ENCODE measurements at regions of chr10 and their contacts with region 1.

Region 1: DNA sequence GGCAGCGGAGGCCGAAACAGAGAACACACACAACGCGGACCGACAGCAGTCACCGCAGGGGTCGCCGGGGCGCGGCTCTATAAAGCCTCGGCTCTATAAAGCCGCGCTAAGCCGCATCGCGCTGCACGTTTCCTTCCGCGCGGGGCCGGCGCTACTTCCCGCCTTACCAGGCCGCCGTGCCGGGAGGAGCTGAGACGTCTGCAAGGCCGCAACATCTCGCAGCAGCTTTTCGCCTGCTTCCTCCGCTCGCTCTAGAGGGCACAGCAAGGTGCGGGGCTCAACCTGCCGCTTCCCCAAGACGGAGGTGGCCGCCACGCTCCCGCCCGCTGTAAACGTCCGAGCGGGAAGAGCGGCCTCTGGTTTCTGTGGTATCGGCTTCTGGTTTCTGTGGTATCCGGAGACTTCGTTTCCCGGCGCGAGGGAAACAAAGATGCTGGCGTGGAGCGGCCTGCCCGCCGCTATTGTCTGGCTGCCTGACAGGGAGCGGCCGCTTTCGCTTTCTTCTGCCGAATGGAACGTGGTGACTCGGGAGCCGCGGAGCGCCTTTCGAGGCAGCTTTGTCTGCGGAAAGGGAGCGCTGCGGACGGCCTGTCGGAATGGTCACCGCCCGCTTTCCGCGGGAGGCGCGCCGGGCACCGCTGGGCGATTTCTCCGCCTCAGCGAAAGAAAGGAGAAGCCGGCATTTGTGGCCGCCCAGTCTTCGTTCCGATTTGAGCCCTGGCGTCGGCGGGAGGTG is 91.8 kb downstream of the SPAG6 start:
- DNase-seq: peak; percentile 82
- H3K4me3 Mint-ChIP-seq: peak overlapping the region; percentile 89
- H3K27ac Mint-ChIP-seq: peak overlapping the region; percentile 93
- H3K4me1 Mint-ChIP-seq: peaks cover 41% of the 10 kb centered on the region
- H3K27me3 Mint-ChIP-seq: peaks cover 9% of the 10 kb centered on the region

Region 2: DNA sequence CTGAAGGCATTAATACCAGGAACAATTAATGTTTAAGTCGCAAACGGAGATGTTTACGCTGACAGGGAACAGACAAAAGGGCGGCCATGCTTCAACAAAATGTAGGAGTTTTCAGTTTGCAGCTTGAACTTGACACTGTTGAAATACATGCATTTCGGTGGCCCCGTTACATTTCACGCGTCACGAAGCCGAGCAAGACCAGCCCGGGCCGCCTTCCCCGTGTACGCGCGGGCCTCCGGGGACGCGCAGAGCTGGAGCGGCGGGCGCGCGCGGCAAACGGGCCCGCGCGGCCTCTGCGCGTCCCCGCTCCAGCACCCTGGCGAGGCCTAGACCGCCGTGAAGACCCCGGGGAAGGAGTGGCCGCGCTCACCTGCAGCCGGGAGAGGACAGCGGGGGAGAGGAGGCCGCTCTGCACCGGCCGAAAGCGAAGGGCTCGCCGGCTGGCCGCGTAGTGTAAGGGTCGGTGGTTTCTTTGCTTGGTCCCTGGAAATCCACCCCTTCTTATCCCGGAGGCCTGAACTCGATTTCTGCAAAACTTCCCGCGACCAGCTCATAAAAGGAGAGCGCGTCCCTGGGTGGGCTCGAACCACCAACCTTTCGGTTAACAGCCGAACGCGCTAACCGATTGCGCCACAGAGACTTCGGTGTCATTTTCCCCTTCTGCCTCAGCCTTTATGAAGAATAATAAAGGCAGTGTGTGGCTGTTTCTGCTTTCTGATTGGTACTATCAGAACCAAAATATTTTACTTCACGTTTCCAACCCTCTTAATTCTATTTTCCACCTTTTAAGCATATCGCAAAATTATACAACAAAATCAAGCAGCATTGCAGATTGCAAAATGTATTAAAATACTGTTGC is 207.9 kb before region 1 on chr10:
- intact Hi-C with region 1: loop called (anchors 10 kb)
- DNase-seq: peak; percentile 82
- H3K4me3 Mint-ChIP-seq: peak overlapping the region; percentile 88
- H3K27ac Mint-ChIP-seq: peak overlapping the region; percentile 82
- H3K4me1 Mint-ChIP-seq: peaks cover 18% of the 10 kb centered on the region
- H3K27me3 Mint-ChIP-seq: peaks cover 8% of the 10 kb centered on the region

Region 3: DNA sequence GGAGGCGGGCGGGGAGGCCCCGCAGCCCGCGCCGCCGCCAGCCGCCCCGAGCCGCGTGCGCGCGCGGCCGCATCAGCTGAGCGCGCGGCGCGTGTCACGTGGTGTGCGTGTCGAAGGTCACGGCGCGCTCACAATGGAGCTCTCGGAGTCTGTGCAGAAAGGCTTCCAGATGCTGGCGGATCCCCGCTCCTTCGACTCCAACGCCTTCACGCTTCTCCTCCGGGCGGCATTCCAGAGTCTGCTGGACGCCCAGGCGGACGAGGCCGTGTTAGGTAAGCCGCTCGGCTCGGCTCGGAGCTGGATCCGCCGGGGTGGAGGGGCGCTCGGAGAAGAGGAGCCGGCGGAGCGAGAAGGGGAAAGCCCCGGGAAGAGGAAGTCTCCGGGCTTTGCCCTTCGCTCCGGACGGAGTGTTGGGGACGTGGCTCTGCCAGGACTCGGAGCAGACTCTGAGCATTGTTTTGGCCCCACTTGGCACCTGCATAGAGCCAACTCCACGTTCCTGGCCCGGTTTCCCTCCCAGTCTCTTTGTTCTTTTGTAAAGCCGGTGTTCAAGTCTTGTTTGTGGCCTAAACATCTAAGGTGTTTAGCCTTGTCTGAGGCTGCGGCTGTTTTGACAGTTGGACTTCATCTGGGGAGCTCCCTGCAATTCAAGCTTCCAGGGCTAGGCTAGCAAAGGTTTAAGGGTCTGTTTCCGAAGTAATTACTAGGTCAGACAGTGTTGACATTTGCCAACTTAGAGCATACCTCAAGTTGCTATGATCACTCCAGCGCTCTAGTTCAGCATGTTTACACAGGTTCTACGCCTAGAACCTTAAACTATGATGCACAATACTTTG is 120.5 kb before region 1 on chr10 and contains the start of gene COMMD3:
- intact Hi-C with region 1: loop called (anchors 5 kb)
- DNase-seq: peak; percentile 79
- H3K4me3 Mint-ChIP-seq: peak within 1 kb of the TSS; percentile 88
- H3K27ac Mint-ChIP-seq: peak within 1 kb of the TSS; percentile 88
- H3K4me1 Mint-ChIP-seq: peaks cover 40% of the 10 kb centered on the region
- H3K27me3 Mint-ChIP-seq: peaks cover 1% of the 10 kb centered on the region
- total RNA-seq, gene COMMD3: 92.1 and 105 TPM in 2 replicates

Region 4: DNA sequence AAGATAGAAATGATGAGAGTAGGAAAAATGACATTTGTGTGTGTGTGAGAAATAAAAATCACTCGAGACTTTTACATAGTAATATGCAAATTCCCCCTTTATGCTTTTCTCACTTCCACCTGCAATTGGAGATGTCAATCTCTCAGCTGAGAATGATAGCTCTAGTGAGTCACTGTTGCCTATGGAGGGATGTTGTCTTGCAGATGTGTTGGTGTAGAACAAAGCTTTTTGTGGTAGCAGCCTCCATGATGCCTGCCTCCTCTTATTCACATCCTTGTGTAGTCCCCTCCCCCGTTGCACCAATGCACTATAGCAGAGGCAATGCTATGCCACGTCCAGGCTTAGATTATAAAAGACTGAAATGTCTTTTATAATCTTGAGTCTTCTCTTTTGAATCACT is 58.0 kb before region 1 on chr10:
- intact Hi-C with region 1: loop called (anchors 1 kb)
- DNase-seq: no peak
- H3K4me3 Mint-ChIP-seq: no peak overlapping the region
- H3K27ac Mint-ChIP-seq: peak overlapping the region; percentile 69
- H3K4me1 Mint-ChIP-seq: peaks cover 20% of the 10 kb centered on the region
- H3K27me3 Mint-ChIP-seq: no peaks in the 10 kb centered on the region

Region 5: GRCh38 chr10:22580711-22581110 is 143.7 kb after region 1 on chr10:
- intact Hi-C with region 1: no loop called
- DNase-seq: no peak
- H3K4me3 Mint-ChIP-seq: no peak overlapping the region
- H3K27ac Mint-ChIP-seq: no peak overlapping the region
- H3K4me1 Mint-ChIP-seq: peaks cover 14% of the 10 kb centered on the region
- H3K27me3 Mint-ChIP-seq: no peaks in the 10 kb centered on the region

Region 6: GRCh38 chr10:22682237-22683139 is 245.4 kb after region 1 on chr10:
- intact Hi-C with region 1: loop called (anchors 5 kb)
- DNase-seq: peak; percentile 58
- H3K4me3 Mint-ChIP-seq: peak overlapping the region; percentile 69
- H3K27ac Mint-ChIP-seq: peak overlapping the region; percentile 98
- H3K4me1 Mint-ChIP-seq: peaks cover 83% of the 10 kb centered on the region
- H3K27me3 Mint-ChIP-seq: no peaks in the 10 kb centered on the region